Caco-2 (cell line): ENCODE measurements at regions of chr18 and their contacts with region 1.

Region 1: DNA sequence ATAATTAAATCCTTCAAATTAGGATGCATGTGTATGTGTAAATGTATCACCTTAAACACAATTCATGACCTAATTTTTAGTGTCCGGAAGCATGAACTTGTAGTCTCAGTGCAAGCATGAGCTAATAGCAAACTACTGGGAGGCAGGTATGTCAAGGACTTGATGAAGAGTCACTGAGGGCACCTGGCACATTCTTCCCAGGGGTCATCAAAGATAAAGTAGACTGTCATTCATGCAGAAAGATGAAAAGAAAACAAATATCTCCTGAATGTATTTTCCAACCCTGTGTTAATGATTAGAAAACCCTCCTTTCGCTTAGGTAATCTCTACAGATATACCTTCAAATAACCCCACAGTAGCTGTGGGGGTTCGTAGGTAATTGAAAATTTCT is 234.9 kb downstream of the SOCS6 start:
- DNase-seq: peak; percentile 28 to 56
- H3K4me3 ChIP-seq: no peak overlapping the region
- H3K4me3 Mint-ChIP-seq: no peak overlapping the region
- H3K27ac Mint-ChIP-seq: no peak overlapping the region
- H3K4me1 ChIP-seq: peaks cover 14% of the 10 kb centered on the region
- H3K4me1 Mint-ChIP-seq: peaks cover 12% of the 10 kb centered on the region
- H3K27me3 ChIP-seq: no peaks in the 10 kb centered on the region
- H3K27me3 Mint-ChIP-seq: no peaks in the 10 kb centered on the region
- CTCF ChIP-seq: no peak

Region 2: DNA sequence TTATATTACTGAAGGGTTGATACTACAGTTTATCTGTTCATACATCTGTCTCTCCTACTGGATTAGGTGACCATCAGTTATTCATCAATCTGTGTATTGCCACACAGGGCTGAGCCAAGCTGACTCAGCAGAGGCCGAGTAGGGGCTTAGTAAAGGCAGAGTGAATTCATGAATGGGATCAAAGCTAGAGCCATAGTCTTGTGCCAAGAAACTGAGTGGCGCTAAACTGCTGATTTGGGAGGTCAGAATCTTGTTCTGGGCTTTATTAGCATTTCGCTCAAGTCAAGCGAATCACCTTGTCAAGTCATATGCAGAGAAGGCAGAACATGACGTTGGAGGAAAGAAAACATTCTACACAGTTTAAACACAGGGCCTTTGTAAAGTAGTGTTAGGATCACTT is 200.9 kb before region 1 on chr18:
- CTCF ChIA-PET with region 1: interaction called, 10 read pairs
- POLR2A ChIA-PET with region 1: no interaction called
- intact Hi-C with region 1: no loop called
- DNase-seq: no peak
- H3K4me3 ChIP-seq: no peak overlapping the region
- H3K4me3 Mint-ChIP-seq: no peak overlapping the region
- H3K27ac Mint-ChIP-seq: no peak overlapping the region
- H3K4me1 ChIP-seq: no peaks in the 10 kb centered on the region
- H3K4me1 Mint-ChIP-seq: no peaks in the 10 kb centered on the region
- H3K27me3 ChIP-seq: no peaks in the 10 kb centered on the region
- H3K27me3 Mint-ChIP-seq: no peaks in the 10 kb centered on the region
- CTCF ChIP-seq: no peak

Region 3: DNA sequence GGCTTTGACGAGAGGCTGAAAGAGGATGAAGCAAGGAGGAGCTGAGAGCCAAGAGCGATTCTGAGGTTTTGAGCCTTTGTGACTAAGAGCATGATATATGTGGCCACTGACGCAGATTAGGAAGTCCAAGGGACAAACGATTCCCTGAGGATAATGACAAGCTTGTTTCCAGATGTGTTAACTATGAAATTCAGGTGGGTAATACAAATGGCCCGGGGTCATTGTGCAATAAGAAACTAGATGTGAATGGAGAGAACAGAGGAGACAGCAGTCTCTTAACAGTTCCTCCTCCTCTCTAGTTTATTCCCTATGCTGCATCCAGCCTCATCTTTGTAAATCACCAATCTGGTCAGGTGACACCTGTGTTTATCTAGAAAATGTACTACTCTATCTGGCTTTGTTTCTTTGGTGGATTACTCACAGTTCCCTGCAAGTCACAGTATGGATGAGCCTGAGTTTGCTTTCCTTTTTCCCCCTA is 150.7 kb before region 1 on chr18:
- CTCF ChIA-PET with region 1: no interaction called
- POLR2A ChIA-PET with region 1: no interaction called
- intact Hi-C with region 1: no loop called
- DNase-seq: peak in 1 of 2 experiments; percentile 46
- H3K4me3 ChIP-seq: no peak overlapping the region
- H3K4me3 Mint-ChIP-seq: peak overlapping the region; percentile 37
- H3K27ac Mint-ChIP-seq: peak overlapping the region; percentile 56
- H3K4me1 ChIP-seq: peaks cover 64% of the 10 kb centered on the region
- H3K4me1 Mint-ChIP-seq: peaks cover 32% of the 10 kb centered on the region
- H3K27me3 ChIP-seq: no peaks in the 10 kb centered on the region
- H3K27me3 Mint-ChIP-seq: no peaks in the 10 kb centered on the region
- CTCF ChIP-seq: no peak